Calu3 (cell line): ENCODE measurements at regions of chr17 and their contacts with region 1.

Region 1: DNA sequence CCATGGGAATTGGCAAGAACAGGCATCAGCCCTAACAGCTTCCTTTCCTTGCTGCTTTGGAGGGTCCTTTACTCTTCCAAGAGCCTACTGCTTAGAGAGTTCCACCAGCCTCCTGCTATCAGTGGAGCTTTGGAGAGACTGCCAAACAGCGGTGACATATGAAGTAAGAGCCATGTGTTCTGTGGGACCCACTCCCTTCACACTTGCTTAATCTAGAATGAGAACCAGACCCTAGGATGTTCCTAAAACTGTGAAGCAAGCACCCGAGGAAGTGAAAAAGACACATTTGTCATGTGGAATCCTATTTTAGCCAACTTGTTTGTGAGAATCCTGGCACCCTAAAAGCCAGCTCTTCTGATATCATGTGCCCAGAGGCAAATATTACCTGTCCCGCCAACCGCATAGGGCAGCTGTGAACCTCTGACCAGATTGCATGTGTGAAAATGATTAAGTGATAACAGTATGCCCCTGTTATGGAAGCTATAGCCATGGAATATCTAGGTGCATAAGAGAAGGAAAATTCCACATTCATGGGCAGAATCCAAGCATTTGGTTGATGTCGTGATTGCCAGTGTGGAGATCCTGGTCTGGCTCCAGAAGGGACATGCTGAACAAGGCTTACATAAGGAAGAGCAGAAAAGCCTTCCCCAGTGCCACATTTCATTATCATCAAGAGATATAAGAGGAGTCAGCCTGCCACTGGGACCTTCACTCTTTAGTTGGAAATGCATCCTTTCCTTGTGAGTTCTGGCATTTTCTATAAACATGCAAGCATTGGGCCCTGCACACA is 18.7 kb downstream of the RCVRN start:
- DNase-seq: no peak
- H3K4me3 Mint-ChIP-seq: no peak overlapping the region
- H3K27ac Mint-ChIP-seq: no peak overlapping the region
- H3K4me1 Mint-ChIP-seq: peaks cover 8% of the 10 kb centered on the region
- H3K27me3 Mint-ChIP-seq: no peaks in the 10 kb centered on the region
- CTCF ChIP-seq: no peak

Region 2: GRCh38 chr17:9828296-9829295 is 57.7 kb before region 1 on chr17:
- CTCF ChIA-PET with region 1: no interaction called
- intact Hi-C with region 1: loop called (anchors 5 kb)
- DNase-seq: peak; percentile 40
- H3K4me3 Mint-ChIP-seq: no peak overlapping the region
- H3K27ac Mint-ChIP-seq: no peak overlapping the region
- H3K4me1 Mint-ChIP-seq: peaks cover 8% of the 10 kb centered on the region
- H3K27me3 Mint-ChIP-seq: no peaks in the 10 kb centered on the region
- CTCF ChIP-seq: no peak

Region 3: DNA sequence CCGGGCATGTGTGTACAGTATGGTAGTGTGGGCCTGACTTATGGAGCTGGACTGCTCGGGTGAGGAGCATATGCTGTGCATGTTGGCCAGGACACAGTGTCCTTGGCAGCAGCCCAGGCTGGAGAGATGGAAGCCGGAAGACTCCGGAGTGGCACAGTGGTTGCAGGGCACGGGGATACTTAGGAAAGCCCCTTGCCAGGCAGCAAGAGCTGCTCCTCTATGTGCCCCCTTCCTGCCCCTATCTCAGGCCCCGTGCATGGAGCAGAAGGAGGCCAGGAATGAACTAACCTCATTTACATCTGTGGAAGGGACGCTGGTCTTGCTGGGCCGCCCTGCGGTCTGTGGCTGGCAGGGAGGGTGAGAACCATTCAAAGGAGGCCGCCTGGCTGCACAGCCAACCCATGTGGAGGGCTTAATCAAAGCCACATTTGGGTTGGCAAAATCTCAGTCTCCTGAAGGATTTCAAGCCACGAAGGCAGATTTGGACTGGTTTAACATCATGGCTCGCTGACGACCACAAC is 51.0 kb after region 1 on chr17:
- CTCF ChIA-PET with region 1: no interaction called
- intact Hi-C with region 1: no loop called
- DNase-seq: no peak
- H3K4me3 Mint-ChIP-seq: no peak overlapping the region
- H3K27ac Mint-ChIP-seq: no peak overlapping the region
- H3K4me1 Mint-ChIP-seq: no peaks in the 10 kb centered on the region
- H3K27me3 Mint-ChIP-seq: no peaks in the 10 kb centered on the region
- CTCF ChIP-seq: no peak

Region 4: DNA sequence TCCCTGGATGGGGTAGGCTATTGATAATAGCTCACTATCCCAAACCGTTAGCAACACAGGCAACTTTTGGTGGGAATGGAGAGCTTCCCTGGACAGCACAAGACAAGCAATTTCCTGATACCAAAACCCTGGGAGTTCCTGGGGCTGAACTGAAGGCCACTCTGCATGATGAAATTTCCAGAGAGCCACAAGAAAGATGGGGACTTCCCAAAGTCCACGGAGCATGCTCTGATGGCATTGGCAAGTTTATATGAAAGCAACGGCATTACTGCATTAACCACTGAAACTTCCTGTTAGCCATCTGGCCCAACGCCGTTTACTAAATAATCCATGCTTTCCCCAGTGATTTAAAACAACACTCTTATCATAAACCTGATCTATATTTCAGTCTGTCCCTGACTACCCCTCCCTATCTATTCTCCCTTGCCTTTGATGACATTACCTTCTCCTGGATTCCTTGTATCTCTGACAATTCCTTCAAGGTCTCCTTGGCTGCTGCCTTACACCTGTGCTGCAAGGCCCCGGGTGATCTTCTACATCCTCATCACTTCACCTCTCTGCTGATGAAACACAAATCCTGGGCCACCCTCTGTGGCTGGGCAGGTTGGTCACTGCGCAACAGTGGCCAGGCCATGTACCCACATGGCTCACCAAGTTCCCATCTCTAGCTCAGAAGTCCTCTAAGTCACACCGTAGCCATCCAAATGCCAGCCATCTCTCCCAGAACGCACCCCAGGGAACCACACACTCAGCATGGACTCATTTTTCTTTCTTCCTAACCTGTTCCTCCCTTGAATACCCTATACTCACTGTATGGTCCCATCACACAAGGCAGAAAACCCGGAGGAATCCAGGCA is 127.3 kb after region 1 on chr17:
- CTCF ChIA-PET with region 1: no interaction called
- intact Hi-C with region 1: no loop called
- DNase-seq: no peak
- H3K4me3 Mint-ChIP-seq: no peak overlapping the region
- H3K27ac Mint-ChIP-seq: no peak overlapping the region
- H3K4me1 Mint-ChIP-seq: no peaks in the 10 kb centered on the region
- H3K27me3 Mint-ChIP-seq: no peaks in the 10 kb centered on the region
- CTCF ChIP-seq: no peak